Endothelial cell of umbilical vein (primary cell): ENCODE measurements at regions of chr2 and their contacts with region 1.

Region 1: DNA sequence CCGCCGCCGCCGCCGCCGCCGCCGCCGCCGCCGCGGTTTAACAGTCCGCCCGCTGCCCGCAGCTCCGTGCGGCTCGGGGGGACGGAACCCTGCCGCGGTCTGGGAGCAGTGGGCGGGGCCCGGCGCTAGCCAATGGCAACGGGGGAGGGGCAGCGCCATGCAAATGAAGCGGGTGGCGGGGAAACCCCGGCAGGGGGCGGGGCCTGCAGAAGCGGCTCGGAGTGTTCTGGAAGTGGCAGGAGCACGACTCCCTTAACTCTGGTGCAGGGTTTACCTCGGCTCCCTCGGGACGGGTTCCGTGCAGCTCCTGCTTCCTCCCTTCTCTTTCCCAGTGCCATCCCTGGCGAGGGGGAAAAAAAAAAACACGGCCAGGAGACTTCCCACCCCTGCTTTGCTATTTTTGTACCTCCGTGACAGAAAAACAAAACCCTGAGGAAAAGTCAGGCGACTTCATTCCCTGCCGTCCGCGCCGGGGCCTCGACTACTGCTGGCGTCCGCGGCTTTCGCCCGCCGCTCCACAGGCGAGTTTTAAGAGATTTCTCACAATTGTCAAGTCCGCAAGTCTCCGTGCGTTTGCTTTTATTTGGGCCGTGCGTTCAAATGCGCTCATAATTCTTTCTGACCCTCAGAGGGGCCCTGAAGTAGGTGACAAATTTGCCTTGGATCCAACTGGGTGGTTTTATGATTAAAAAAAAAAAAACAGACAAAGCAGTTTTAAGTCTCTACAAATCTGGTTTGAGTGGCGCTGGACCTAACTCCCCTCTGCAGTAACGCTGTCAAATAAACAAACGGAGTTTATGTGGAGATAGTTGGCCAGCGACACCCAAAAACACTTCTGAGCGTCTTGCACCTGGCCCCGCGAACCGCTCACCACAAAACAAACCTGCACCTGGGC is at the start of gene KANSL1L:
- DNase-seq: peak; percentile 97
- H3K4me3 ChIP-seq: peak within 1 kb of the TSS; percentile 83 to 96 (median 92)
- H3K27ac ChIP-seq: peak within 1 kb of the TSS; percentile 87
- H3K4me1 ChIP-seq: peaks cover 12% of the 10 kb centered on the region
- H3K27me3 ChIP-seq: peaks cover 0 to 2% of the 10 kb centered on the region in 2 experiments
- CTCF ChIP-seq: no peak
- POLR2A ChIP-seq: peak; percentile 57
- total RNA-seq, gene KANSL1L: 13.4 and 14.0 TPM in 2 replicates

Region 2: DNA sequence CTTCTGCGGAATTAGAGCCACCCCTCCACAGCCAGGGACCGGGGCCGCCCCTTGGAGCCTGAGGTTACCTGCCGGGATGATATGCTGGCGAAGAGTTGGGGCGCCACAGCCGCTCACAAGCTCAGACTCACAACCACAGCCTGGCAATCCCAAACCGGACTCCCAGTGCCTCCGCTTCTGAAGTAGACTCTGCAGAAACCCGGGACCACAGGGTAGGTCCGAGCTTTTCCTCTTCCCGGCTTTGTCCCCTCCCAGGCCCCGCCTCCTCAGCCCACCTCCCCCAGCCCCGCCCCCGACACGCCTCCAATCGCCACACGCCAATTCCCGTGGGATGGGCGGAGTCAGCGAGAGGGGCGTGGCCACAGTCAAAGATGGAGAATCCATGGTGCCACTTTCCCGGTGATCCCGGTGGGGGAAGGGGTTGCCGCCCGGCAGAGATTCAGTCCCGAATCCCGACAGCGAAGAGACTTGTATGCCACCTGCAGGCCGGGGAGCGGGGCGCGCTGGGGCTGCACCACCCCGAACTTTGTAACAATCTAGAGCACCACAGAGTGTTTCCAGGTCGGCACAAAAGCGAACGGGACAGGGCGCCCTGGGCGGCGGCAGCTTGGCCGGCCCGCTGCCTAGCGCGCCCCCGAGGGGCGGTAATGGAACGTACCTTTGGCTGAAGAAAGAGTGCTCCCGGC is 1916.5 kb before region 1 on chr2 and contains the start of gene IDH1:
- CTCF ChIA-PET with region 1: no interaction called
- POLR2A ChIA-PET with region 1: no interaction called
- dilution Hi-C with region 1: no loop called
- intact Hi-C with region 1: loop called (anchors 2 kb)
- DNase-seq: peak; percentile 95
- H3K4me3 ChIP-seq: peak within 1 kb of the TSS; percentile 74 to 99 (median 99)
- H3K27ac ChIP-seq: peak within 1 kb of the TSS; percentile 50
- H3K4me1 ChIP-seq: peaks cover 24% of the 10 kb centered on the region
- H3K27me3 ChIP-seq: no peaks in the 10 kb centered on the region
- CTCF ChIP-seq: peak; percentile 52 to 74
- POLR2A ChIP-seq: peak; percentile 58
- total RNA-seq, gene IDH1: 107 and 124 TPM in 2 replicates

Region 3: GRCh38 chr2:209495855-209496585 is 675.5 kb before region 1 on chr2:
- CTCF ChIA-PET with region 1: no interaction called
- POLR2A ChIA-PET with region 1: interaction called, 3 read pairs
- dilution Hi-C with region 1: no loop called
- intact Hi-C with region 1: loop called (anchors 10 kb)
- DNase-seq: peak; percentile 99
- H3K4me3 ChIP-seq: peak overlapping the region in 1 of 3 experiments; percentile 52
- H3K27ac ChIP-seq: peak overlapping the region; percentile 100
- H3K4me1 ChIP-seq: peaks cover 30% of the 10 kb centered on the region
- H3K27me3 ChIP-seq: no peaks in the 10 kb centered on the region
- CTCF ChIP-seq: no peak
- POLR2A ChIP-seq: peak; percentile 46

Region 4: DNA sequence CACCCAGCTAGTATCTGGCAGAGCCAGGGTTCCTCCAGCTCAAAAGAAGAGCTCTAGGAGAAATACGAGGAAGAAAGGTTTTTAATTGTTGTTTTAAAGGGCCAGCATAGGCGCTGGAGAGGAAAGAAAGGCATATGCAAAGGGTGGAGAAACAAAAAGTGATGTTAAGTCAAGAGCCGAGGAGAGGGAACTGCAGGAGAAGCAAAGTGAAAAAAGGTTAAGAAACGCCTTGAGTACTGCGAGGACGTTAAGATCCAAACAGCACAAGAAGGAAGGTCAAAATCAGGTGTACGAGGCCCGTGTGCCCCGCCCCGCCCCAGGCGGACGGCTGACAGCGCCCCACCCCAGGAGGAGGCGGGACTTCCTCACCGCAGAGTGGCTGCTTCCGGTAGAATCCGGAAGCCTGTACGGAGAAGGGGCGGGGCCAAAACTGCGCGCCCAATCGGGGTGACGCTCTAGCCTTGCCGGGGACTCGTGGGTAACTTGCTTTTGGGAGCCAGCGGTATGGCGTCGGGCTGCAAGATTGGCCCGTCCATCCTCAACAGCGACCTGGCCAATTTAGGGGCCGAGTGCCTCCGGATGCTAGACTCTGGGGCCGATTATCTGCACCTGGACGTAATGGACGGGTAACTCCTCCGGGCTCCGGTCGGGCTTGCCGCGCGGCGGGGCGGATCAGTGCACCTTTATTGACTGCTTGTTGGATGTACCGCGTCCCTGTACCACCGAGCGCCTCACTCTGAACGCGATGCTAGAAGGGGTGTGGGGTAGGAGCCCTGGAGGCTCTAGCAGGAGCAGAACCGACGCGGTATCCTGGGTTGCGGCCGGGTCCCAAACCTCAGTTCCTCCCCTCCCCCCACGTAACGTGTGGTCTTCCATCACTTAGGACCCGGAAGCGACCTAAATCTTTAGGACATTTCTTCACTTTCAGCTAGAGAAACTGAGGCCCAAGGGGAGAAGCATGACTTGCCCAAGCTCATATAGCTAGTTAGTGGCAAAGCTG is 169.1 kb before region 1 on chr2 and contains the start of gene RPE:
- CTCF ChIA-PET with region 1: interaction called, 5 read pairs
- POLR2A ChIA-PET with region 1: no interaction called
- dilution Hi-C with region 1: no loop called
- intact Hi-C with region 1: loop called (anchors 1 kb)
- DNase-seq: peak; percentile 95
- H3K4me3 ChIP-seq: peak within 1 kb of the TSS; percentile 83 to 98 (median 95)
- H3K27ac ChIP-seq: peak within 1 kb of the TSS; percentile 50
- H3K4me1 ChIP-seq: peaks cover 26% of the 10 kb centered on the region
- H3K27me3 ChIP-seq: no peaks in the 10 kb centered on the region
- CTCF ChIP-seq: no peak
- POLR2A ChIP-seq: peak; percentile 92
- total RNA-seq, gene RPE: 59.7 and 60.7 TPM in 2 replicates

Region 5: DNA sequence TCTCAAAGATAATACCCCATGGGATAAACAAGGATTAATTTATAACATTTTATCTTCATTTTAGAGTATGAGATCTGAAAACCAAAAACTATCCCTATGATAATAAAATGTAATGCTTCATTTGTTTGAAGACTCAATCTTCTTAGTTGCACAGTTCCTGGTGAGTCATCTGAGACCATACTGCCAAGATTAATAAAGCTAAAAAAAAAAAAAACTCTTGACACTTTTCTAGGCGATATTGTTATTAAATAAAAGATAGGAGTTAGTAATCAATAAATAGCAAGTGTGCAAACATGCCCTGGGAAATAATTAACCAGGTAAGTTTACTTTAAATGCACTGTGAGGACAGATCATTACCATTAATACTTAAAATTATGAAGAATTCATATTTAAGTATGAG is 85.3 kb before region 1 on chr2:
- CTCF ChIA-PET with region 1: no interaction called
- POLR2A ChIA-PET with region 1: no interaction called
- dilution Hi-C with region 1: no loop called
- intact Hi-C with region 1: loop called (anchors 5 kb)
- DNase-seq: peak; percentile 54
- H3K4me3 ChIP-seq: no peak overlapping the region
- H3K27ac ChIP-seq: no peak overlapping the region
- H3K4me1 ChIP-seq: peaks cover 5% of the 10 kb centered on the region
- H3K27me3 ChIP-seq: no peaks in the 10 kb centered on the region
- CTCF ChIP-seq: no peak
- POLR2A ChIP-seq: no peak

Region 6: DNA sequence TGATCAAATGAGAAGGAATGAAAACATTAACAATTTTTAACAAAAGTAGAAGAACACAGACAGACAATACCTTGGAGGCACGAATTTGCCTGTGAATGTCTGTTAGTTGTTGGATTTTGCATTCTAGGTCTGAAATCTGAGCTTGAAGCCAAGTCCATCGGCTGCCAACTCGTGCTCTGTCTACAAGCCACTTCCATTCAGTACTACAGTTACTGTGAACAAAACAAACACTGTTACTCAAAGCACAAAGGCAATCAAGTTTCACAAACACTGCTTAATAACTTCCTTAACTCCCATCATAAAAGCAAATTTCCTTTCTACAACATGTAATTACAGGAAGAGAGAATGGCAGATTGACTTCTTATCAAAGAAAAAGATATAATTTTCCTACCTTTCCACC is 42.6 kb before region 1 on chr2:
- CTCF ChIA-PET with region 1: no interaction called
- POLR2A ChIA-PET with region 1: no interaction called
- dilution Hi-C with region 1: no loop called
- intact Hi-C with region 1: no loop called
- DNase-seq: peak; percentile 21
- H3K4me3 ChIP-seq: no peak overlapping the region
- H3K27ac ChIP-seq: no peak overlapping the region
- H3K4me1 ChIP-seq: no peaks in the 10 kb centered on the region
- H3K27me3 ChIP-seq: no peaks in the 10 kb centered on the region
- CTCF ChIP-seq: no peak
- POLR2A ChIP-seq: no peak